GM12878 (cell line): ENCODE measurements at regions of chr19 and their contacts with region 1.

Region 1: DNA sequence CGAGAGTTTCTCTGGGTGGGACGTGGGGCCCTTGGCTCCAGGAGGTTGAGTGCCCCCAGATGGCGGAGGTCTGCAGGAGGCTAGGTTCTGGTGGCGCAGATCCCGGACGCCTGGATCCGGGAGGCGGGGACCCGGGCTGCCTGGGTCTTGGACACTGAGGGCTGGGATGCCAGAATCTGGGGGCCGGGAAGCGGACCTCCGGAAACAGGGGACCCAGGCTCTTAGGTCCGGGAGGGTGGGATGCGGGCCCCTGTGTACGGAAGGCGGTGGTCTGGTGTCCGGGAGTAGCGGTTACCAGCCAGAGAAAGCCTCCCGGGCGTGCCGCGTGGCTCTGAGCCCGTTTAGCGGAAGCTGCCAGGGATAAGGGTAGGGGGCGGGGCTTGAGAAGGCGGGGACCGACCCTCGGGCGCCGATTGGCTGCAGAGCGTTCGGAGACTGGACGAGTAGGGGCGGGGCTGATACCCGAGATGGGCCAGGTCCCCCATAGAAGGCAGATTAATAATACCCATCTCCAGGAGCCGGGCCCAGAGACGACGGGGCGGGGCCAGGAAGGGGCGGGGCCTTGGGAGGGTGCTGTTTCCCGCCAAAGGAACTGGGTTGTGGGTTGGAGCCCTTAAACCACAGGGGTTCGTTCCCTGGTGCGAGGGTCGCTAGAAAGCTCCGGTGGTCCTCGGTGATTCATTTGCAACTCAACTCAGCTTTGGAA is at the start of gene SLC1A5:
- DNase-seq: peak; percentile 86
- ATAC-seq: peak; percentile 81
- H3K4me3 ChIP-seq: peak within 1 kb of the TSS; percentile 100
- H3K27ac ChIP-seq: peak within 1 kb of the TSS; percentile 94
- H3K4me1 ChIP-seq: 0 out of 2 replicates have a peak, but pooled peaks cover 7% of the 10 kb centered on the region
- H3K27me3 ChIP-seq: no peaks in the 10 kb centered on the region; a peak in 1 of 4 replicates
- CTCF ChIP-seq: no peak
- EP300 ChIP-seq: no peak
- POLR2A ChIP-seq: peak; percentile 100
- RAD21 ChIP-seq: no peak
- polyA plus RNA-seq, gene SLC1A5: 9.1 to 16.3 TPM

Region 2: GRCh38 chr19:46596008-46596407 is 192.4 kb before region 1 on chr19:
- CTCF ChIA-PET with region 1: no interaction called
- POLR2A ChIA-PET with region 1: no interaction called
- RAD21 ChIA-PET with region 1: no interaction called
- SMC1A ChIA-PET with region 1: no interaction called
- in situ Hi-C with region 1: no loop called
- intact Hi-C with region 1: no loop called
- DNase-seq: no peak
- ATAC-seq: no peak
- H3K4me3 ChIP-seq: no peak overlapping the region
- H3K27ac ChIP-seq: no peak overlapping the region
- H3K4me1 ChIP-seq: no peaks in the 10 kb centered on the region
- H3K27me3 ChIP-seq: no peaks in the 10 kb centered on the region
- CTCF ChIP-seq: no peak
- EP300 ChIP-seq: no peak
- POLR2A ChIP-seq: no peak
- RAD21 ChIP-seq: no peak

Region 3: GRCh38 chr19:46772170-46773017 is 16.0 kb before region 1 on chr19:
- CTCF ChIA-PET with region 1: interaction called, 43 read pairs
- POLR2A ChIA-PET with region 1: interaction called, 4 read pairs
- RAD21 ChIA-PET with region 1: no interaction called
- SMC1A ChIA-PET with region 1: interaction called, 6 read pairs
- in situ Hi-C with region 1: no loop called
- intact Hi-C with region 1: no loop called
- DNase-seq: no peak
- ATAC-seq: no peak
- H3K4me3 ChIP-seq: no peak overlapping the region
- H3K27ac ChIP-seq: no peak overlapping the region
- H3K4me1 ChIP-seq: no peaks in the 10 kb centered on the region
- H3K27me3 ChIP-seq: no peaks in the 10 kb centered on the region
- CTCF ChIP-seq: no peak
- EP300 ChIP-seq: no peak
- POLR2A ChIP-seq: no peak
- RAD21 ChIP-seq: no peak

Region 4: DNA sequence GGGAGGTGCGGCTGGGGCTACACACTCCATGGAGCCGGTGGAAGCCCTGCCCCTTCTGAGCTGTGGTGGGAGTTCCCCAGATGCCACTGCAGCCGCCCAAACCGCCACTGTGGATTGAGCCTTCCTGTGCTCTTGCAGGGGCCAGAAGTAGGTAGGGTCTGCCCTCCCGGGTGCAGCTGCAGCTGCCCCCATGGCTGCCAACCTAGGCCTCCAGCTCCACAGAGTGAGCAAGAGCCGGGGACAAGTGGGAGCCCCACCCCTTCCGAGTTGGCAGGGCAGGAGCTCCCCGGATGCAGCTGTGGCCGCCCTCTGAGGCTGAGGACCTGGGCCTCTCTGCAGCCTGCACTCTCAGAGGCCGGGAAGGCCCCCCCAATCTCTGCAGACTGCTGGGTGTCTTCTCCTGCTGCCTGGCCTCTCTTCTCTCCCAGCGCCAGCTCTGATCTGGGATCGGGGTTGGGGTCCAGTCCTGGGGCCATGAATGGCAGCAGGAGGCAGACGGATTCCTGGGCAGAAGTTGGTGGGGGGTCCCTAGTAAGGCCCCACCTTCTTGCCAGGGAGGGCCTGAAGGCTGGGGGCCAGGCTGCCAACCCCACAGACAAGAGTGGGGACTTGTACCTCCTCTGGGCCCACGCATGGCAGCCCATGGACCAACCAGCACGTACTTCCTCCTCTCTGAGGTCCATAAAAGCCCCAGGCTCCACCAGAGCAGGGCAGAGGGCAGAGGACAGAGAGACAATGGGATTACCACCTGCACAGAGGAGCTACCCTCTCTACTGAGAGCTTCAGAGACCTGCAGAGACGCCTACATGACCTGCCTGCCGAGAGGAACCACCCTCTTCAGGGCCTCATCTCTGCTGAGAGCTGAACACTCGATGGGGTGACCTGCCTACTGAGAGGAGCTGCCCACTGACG is 33.3 kb after region 1 on chr19:
- CTCF ChIA-PET with region 1: interaction called, 27 read pairs
- POLR2A ChIA-PET with region 1: interaction called, 13 read pairs
- RAD21 ChIA-PET with region 1: interaction called, 7 read pairs
- SMC1A ChIA-PET with region 1: interaction called, 9 read pairs
- in situ Hi-C with region 1: no loop called
- intact Hi-C with region 1: loop called (anchors 5 kb)
- DNase-seq: no peak
- ATAC-seq: peak; percentile 81
- H3K4me3 ChIP-seq: peak overlapping the region; percentile 33; the same call in 1 of the 2 replicates
- H3K27ac ChIP-seq: peak overlapping the region; percentile 51
- H3K4me1 ChIP-seq: peaks cover 27% of the 10 kb centered on the region
- H3K27me3 ChIP-seq: no peaks in the 10 kb centered on the region
- CTCF ChIP-seq: no peak
- EP300 ChIP-seq: no peak
- POLR2A ChIP-seq: peak; percentile 55
- RAD21 ChIP-seq: no peak

Region 5: GRCh38 chr19:46890423-46891170 is 102.2 kb after region 1 on chr19:
- CTCF ChIA-PET with region 1: no interaction called
- POLR2A ChIA-PET with region 1: no interaction called
- RAD21 ChIA-PET with region 1: no interaction called
- SMC1A ChIA-PET with region 1: no interaction called
- in situ Hi-C with region 1: no loop called
- intact Hi-C with region 1: no loop called
- DNase-seq: no peak
- ATAC-seq: no peak
- H3K4me3 ChIP-seq: no peak overlapping the region
- H3K27ac ChIP-seq: no peak overlapping the region
- H3K4me1 ChIP-seq: peaks cover 26% of the 10 kb centered on the region
- H3K27me3 ChIP-seq: no peaks in the 10 kb centered on the region
- CTCF ChIP-seq: no peak
- EP300 ChIP-seq: no peak
- POLR2A ChIP-seq: no peak
- RAD21 ChIP-seq: no peak